Mucosa of descending colon (tissue), 3 donors: ENCODE measurements at regions of chr5 and their contacts with region 1.

Region 1: GRCh38 chr5:38193015-38193581 is 65.3 kb upstream of the EGFLAM start:
- DNase-seq: peak; percentile 56 to 73 (median 69)
- ATAC-seq: peak; percentile 84
- H3K4me3 ChIP-seq: no peak overlapping the region
- H3K4me1 ChIP-seq: no peaks in the 10 kb centered on the region
- CTCF ChIP-seq: peak; percentile 53

Region 2: DNA sequence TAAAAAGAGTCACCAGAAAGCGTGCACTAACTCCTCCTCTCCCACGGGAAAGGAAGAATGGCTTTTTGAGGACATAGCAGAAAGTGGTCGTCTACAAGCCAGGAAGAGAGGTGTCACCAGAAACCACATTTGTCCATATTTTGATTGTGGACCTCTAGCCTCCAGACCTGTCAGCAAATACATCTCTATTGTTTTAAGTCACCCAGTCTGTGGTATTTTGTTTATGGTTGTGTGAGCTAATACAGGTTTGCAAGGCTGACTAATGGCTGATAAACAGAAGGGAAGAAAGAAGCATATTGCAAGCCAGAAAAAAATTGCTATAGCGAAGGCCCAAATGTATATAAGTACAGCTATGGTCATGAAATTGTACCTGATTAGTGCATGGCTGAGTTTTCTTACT is 792.6 kb before region 1 on chr5:
- intact Hi-C with region 1: loop called in 1 of 2 experiments (anchors 10 kb)
- DNase-seq: no peak
- ATAC-seq: no peak
- H3K4me3 ChIP-seq: no peak overlapping the region
- H3K4me1 ChIP-seq: peaks cover 8% of the 10 kb centered on the region
- CTCF ChIP-seq: no peak

Region 3: GRCh38 chr5:37834542-37835379 is 358.3 kb before region 1 on chr5:
- intact Hi-C with region 1: loop called in 1 of 2 experiments (anchors 5 kb)
- DNase-seq: no peak
- ATAC-seq: no peak
- H3K4me3 ChIP-seq: no peak overlapping the region
- H3K4me1 ChIP-seq: peaks cover 6% of the 10 kb centered on the region
- CTCF ChIP-seq: no peak

Region 4: DNA sequence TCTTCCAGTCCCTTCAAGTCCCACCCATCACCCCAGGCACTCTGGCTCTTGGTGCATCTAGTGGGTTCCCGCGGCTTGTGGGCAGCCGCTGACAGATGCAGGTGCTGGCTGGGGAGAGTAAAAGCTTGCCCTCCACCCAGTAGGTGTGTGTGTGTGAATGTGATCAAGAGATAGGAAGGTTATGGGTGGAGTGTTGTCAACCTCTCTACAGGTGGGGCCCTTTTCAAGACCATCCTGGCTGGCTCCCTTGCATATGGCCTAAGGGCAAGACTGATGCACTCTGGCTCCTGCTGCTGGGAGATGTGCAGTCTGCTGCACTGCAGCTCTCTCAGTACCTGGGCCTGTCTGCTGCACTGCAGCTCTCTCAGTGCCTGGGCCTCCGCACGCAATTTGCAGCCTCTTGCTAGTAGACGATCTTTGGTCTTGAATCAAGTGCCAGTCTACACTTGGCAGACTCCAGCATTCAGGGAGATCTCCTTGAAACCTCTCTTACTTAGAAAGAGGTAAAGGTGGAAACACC is 163.6 kb before region 1 on chr5:
- intact Hi-C with region 1: no loop called
- DNase-seq: no peak
- ATAC-seq: no peak
- H3K4me3 ChIP-seq: no peak overlapping the region
- H3K4me1 ChIP-seq: no peaks in the 10 kb centered on the region
- CTCF ChIP-seq: no peak